ENCODE measurements at regions of chr12 and their contacts with region 1.

Region 1: DNA sequence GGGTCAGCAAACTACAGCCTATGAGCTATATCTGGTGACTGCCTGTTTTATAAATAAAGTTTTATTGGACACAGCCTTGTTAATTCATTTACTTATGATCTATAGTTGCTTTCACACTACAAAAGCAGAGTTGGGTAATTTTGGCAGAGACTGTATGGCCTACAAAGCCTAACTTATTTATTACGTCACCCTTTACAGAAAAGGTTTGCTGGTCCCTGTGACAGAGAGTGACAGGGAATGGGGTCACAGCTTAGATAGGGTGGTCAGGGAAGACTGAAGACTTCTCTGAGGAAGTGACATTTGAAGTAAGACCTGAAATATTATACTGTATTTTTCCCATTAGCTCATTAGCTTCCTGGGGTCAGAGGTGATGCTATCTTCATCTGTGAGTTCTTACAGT is 75.7 kb upstream of the NEDD1 start:
- DNase-seq: no peak
- H3K4me3 ChIP-seq: no peak overlapping the region
- H3K27ac ChIP-seq: no peak overlapping the region
- H3K4me1 ChIP-seq: no peaks in the 10 kb centered on the region
- H3K27me3 ChIP-seq: no peaks in the 10 kb centered on the region
- CTCF ChIP-seq: no peak
- EP300 ChIP-seq: no peak
- POLR2A ChIP-seq: no peak
- RAD21 ChIP-seq: no peak

Region 2: GRCh38 chr12:96811083-96811482 is 20.3 kb before region 1 on chr12:
- CTCF ChIA-PET with region 1: no interaction called
- POLR2A ChIA-PET with region 1: no interaction called
- DNase-seq: no peak
- H3K4me3 ChIP-seq: no peak overlapping the region
- H3K27ac ChIP-seq: no peak overlapping the region
- H3K4me1 ChIP-seq: peaks cover 0 to 3% (median 0%) of the 10 kb centered on the region in 4 experiments; a peak in 1 of 7 replicates
- H3K27me3 ChIP-seq: no peaks in the 10 kb centered on the region
- CTCF ChIP-seq: no peak
- EP300 ChIP-seq: no peak
- POLR2A ChIP-seq: no peak
- RAD21 ChIP-seq: no peak

Region 3: DNA sequence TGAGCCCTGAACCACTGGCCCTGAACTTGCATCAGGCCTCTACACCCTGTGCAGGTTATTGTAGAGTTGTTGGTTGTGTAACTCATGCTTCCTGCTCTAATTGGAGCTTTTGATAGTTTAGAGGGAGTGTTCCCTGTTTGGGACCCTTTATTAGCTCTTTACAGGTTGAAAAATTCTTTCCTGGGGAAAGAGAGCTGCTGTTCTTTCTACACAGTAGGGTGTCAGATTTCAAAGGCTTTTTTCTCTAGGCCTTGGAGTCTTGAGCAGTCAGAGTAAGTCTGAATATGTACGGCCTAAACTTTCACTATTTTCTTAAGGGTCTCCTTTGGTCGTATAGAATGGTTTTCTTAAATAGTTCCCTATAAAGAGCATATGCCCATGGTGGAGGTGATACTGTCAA is 14.9 kb after region 1 on chr12:
- CTCF ChIA-PET with region 1: interaction called, 11 read pairs
- POLR2A ChIA-PET with region 1: interaction called, 3 read pairs
- DNase-seq: no peak
- H3K4me3 ChIP-seq: no peak overlapping the region
- H3K27ac ChIP-seq: no peak overlapping the region
- H3K4me1 ChIP-seq: peaks cover 0 to 6% (median 0%) of the 10 kb centered on the region in 4 experiments; a peak in 2 of 7 replicates
- H3K27me3 ChIP-seq: no peaks in the 10 kb centered on the region
- CTCF ChIP-seq: no peak
- EP300 ChIP-seq: no peak
- POLR2A ChIP-seq: no peak
- RAD21 ChIP-seq: no peak

Region 4: DNA sequence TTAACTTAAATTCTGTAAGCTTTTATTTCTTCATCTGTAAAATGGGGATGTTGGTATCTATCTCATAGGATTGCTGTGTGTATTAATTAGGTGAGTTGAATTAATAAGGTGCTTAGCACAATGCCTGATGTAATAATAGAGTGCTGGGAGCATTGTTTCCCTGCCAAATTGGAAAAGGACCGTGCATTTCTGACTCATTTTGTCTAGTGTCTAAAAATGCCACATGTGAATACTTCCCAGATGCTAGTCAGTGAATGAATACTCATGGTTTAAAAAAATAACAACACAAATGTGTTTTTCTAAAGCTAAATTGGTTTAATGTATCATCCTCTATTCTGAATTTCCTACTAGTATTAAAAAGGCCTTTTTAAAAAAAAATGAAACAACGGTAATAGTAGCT is 30.3 kb after region 1 on chr12:
- CTCF ChIA-PET with region 1: no interaction called
- POLR2A ChIA-PET with region 1: no interaction called
- DNase-seq: no peak
- H3K4me3 ChIP-seq: no peak overlapping the region
- H3K27ac ChIP-seq: no peak overlapping the region
- H3K4me1 ChIP-seq: peaks cover 0 to 6% (median 0%) of the 10 kb centered on the region in 4 experiments; a peak in 2 of 7 replicates
- H3K27me3 ChIP-seq: no peaks in the 10 kb centered on the region
- CTCF ChIP-seq: no peak
- EP300 ChIP-seq: no peak
- POLR2A ChIP-seq: no peak
- RAD21 ChIP-seq: no peak